Activated T-helper 2 cell treated with anti-CD3 and anti-CD28 coated beads, Interferon-gamma antibody, Interleukin-2, Interleukin-4, amounts not matched to agents 10 μg/mL and 5 μg/mL and 100 μg/mL, durations not matched to agents 14 hours and 24 hours and 36 hours (primary cell): ENCODE measurements at regions of chr1 and their contacts with region 1.

Region 1: GRCh38 chr1:35192853-35193664 is at the start of gene SFPQ:
- DNase-seq: peak; percentile 96
- H3K4me3 Mint-ChIP-seq: peak within 1 kb of the TSS; percentile 91
- H3K27ac Mint-ChIP-seq: peak within 1 kb of the TSS; percentile 98
- H3K4me1 Mint-ChIP-seq: peaks cover 32% of the 10 kb centered on the region
- H3K27me3 Mint-ChIP-seq: peaks cover 4% of the 10 kb centered on the region
- total RNA-seq, gene SFPQ: 358 and 369 TPM in 2 replicates

Region 2: GRCh38 chr1:34984793-34985608 is 208.1 kb before region 1 on chr1 and contains the start of gene TMEM35B:
- intact Hi-C with region 1: loop called (anchors 1 kb)
- DNase-seq: peak; percentile 72
- H3K4me3 Mint-ChIP-seq: peak within 1 kb of the TSS; percentile 94
- H3K27ac Mint-ChIP-seq: peak within 1 kb of the TSS; percentile 88
- H3K4me1 Mint-ChIP-seq: peaks cover 36% of the 10 kb centered on the region
- H3K27me3 Mint-ChIP-seq: no peaks in the 10 kb centered on the region
- total RNA-seq, gene TMEM35B: 15.0 and 19.3 TPM in 2 replicates

Region 3: DNA sequence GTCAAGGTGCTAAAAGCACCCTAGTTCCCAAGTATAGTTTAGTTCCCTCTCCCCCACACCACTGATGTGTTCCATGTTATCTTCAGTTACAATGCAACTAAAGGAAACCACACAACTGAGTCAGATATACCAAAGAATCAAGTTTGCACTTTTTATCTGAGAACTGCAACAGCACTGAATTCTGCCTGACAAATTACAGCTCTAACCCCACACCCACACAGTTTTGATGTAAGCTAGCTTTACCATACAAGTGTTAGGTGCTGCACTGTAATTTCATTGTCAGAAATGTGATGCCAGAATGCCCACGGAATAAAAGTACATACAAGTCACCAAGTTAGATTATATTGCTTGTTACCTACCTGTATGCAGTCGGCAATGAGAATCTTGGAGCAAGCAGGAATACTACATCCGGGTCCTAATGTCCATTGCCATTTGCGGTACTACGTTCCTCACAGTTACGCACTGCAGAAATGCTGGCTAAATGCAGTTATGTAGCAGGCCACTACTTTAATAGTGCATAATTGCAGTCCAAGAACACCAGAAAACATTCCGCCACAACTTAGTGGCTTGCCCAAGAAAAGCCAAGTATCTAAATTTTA is 12.2 kb before region 1 on chr1:
- intact Hi-C with region 1: loop called (anchors 1 kb)
- DNase-seq: no peak
- H3K4me3 Mint-ChIP-seq: peak overlapping the region; percentile 27
- H3K27ac Mint-ChIP-seq: peak overlapping the region; percentile 64
- H3K4me1 Mint-ChIP-seq: peaks cover 53% of the 10 kb centered on the region
- H3K27me3 Mint-ChIP-seq: no peaks in the 10 kb centered on the region

Region 4: DNA sequence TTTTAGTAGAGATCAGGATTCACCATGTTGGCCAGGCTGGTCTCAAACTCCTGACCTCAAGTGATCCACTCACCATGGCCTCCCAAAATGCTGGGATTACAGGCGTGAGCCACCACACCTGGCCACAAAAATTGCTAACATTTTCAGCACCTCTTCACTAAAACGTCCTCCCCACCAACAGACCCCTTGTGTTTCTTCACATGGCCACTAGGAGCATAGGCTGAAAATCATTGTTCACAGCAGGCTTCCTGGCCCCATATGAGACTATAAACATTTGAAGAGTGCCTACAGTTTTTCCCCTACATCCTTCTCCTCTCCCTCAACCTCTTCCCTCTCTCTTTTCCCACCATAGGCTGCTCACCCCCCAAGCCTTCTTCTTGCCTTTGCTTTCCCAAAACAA is 27.9 kb after region 1 on chr1:
- intact Hi-C with region 1: no loop called
- DNase-seq: no peak
- H3K4me3 Mint-ChIP-seq: no peak overlapping the region
- H3K27ac Mint-ChIP-seq: no peak overlapping the region
- H3K4me1 Mint-ChIP-seq: no peaks in the 10 kb centered on the region
- H3K27me3 Mint-ChIP-seq: no peaks in the 10 kb centered on the region

Region 5: GRCh38 chr1:35544978-35545377 is 351.9 kb after region 1 on chr1:
- intact Hi-C with region 1: loop called (anchors 5 kb)
- DNase-seq: no peak
- H3K4me3 Mint-ChIP-seq: no peak overlapping the region
- H3K27ac Mint-ChIP-seq: no peak overlapping the region
- H3K4me1 Mint-ChIP-seq: peaks cover 25% of the 10 kb centered on the region
- H3K27me3 Mint-ChIP-seq: no peaks in the 10 kb centered on the region

Region 6: GRCh38 chr1:35715568-35716002 is 522.5 kb after region 1 on chr1:
- intact Hi-C with region 1: loop called (anchors 5 kb)
- DNase-seq: peak; percentile 68
- H3K4me3 Mint-ChIP-seq: peak overlapping the region; percentile 57
- H3K27ac Mint-ChIP-seq: no peak overlapping the region
- H3K4me1 Mint-ChIP-seq: peaks cover 29% of the 10 kb centered on the region
- H3K27me3 Mint-ChIP-seq: no peaks in the 10 kb centered on the region

Region 7: GRCh38 chr1:36155408-36156328 is 962.6 kb after region 1 on chr1 and contains the start of gene MAP7D1:
- intact Hi-C with region 1: loop called (anchors 5 kb)
- DNase-seq: peak; percentile 80
- H3K4me3 Mint-ChIP-seq: peak within 1 kb of the TSS; percentile 89
- H3K27ac Mint-ChIP-seq: peak within 1 kb of the TSS; percentile 90
- H3K4me1 Mint-ChIP-seq: peaks cover 61% of the 10 kb centered on the region
- H3K27me3 Mint-ChIP-seq: no peaks in the 10 kb centered on the region
- total RNA-seq, gene MAP7D1: 162 and 172 TPM in 2 replicates